H1 (cell line): ENCODE measurements at regions of chr12 and their contacts with region 1.

Region 1: DNA sequence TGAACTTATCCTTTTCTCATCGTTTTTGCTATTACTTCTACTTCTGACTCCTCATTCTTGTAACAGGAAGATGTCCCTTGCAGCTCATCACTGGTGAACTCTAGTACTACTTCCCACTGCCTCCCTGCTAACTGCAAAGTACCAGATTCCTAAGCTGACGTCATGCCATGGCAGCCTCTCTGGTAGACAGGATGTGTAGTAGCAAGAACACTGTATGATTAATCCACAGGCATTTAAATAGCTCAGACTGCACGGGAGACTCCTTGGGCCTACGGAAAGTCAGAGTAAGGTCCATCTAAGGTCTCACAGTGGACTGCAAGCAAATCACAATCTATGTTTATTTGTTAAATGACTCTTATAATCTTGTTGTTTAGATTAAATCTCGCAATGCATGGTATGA is 43.5 kb downstream of the DNAI7 start:
- DNase-seq: no peak
- H3K4me3 ChIP-seq: no peak overlapping the region
- H3K27ac ChIP-seq: no peak overlapping the region
- H3K4me1 ChIP-seq: peaks cover 0 to 9% (median 0%) of the 10 kb centered on the region in 4 experiments; a peak in 3 of 7 replicates
- H3K27me3 ChIP-seq: no peaks in the 10 kb centered on the region
- CTCF ChIP-seq: no peak
- EP300 ChIP-seq: no peak
- POLR2A ChIP-seq: no peak
- RAD21 ChIP-seq: no peak

Region 2: DNA sequence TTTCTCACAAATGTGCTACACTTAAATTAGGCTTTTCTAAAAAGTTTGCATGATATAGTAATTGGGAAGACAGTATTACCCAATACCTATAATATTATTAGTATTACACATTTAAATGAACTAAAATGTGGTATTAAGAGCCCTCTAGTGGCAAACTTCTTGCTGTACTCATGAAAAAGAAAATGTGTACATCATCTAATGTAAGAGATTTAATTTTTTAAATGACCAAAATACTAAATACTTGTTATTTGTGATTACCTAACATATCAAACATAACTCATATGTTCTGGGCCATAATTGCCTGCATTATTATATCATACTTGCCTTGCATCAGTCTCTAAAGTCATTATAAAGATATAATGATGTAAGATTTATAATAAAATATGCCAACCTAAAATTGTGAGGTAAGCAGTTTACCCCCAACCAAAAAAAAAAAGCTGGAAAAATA is 20.7 kb before region 1 on chr12:
- CTCF ChIA-PET with region 1: interaction called, 19 read pairs
- POLR2A ChIA-PET with region 1: no interaction called
- DNase-seq: no peak
- H3K4me3 ChIP-seq: no peak overlapping the region
- H3K27ac ChIP-seq: no peak overlapping the region
- H3K4me1 ChIP-seq: no peaks in the 10 kb centered on the region
- H3K27me3 ChIP-seq: no peaks in the 10 kb centered on the region
- CTCF ChIP-seq: peak in 2 of 3 experiments; percentile 19 to 25; a peak in 2 of 4 replicates
- EP300 ChIP-seq: no peak
- POLR2A ChIP-seq: no peak
- RAD21 ChIP-seq: peak; percentile 50 to 66

Region 3: DNA sequence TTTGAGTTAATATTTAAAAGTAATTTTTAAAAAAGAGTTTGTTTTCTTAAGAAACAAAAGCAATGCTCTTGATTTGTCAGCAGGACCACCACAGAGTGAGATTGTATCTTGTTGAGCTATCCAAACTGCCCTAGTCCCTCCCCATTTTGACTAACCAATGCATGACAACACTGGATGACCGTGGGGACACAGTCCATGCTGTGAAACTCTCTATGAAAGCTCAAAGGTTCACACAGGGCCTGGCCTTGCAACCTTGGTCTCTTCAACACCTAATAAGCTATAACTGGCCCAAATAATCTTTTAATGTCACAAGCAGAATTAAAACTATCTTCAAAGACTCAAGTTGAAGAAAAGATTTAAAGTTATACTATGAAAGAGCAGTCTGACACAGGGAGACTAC is 57.1 kb after region 1 on chr12:
- CTCF ChIA-PET with region 1: no interaction called
- POLR2A ChIA-PET with region 1: no interaction called
- DNase-seq: no peak
- H3K4me3 ChIP-seq: no peak overlapping the region
- H3K27ac ChIP-seq: no peak overlapping the region
- H3K4me1 ChIP-seq: no peaks in the 10 kb centered on the region
- H3K27me3 ChIP-seq: no peaks in the 10 kb centered on the region
- CTCF ChIP-seq: no peak
- EP300 ChIP-seq: no peak
- POLR2A ChIP-seq: no peak
- RAD21 ChIP-seq: no peak

Region 4: DNA sequence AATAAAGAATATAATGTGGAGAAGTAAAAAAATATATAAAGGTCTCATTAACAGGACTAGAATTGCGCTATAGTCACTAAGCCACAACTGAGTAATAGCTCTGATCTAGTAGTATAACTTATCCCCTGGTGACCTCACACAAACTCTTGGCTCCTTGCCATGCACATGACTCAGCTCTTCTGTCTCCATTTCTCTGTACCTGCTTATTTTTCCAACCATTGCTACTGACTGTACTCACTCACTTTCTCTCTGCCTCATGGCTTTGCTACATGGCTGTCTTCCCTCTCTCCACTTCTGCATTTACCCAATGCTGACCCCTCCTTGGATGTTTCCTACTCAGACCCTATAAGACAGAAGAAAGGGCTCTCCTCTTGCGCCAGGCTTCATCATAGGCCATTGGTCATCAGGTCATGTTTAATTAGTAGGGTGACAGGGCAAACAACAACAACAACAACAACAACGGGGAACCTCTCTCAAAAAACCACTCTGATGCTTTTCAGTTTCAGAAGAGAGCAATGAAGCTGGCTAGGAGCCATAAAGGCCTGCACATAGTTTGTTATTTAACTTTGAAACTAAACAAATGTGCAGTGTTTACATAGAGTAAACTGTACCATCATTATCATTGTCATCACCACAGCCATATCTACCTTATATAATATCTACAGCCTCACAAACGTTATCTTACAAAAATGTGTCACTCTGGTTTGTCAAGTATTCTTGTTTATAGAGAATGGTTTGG is 124.9 kb after region 1 on chr12:
- CTCF ChIA-PET with region 1: no interaction called
- POLR2A ChIA-PET with region 1: no interaction called
- DNase-seq: no peak
- H3K4me3 ChIP-seq: no peak overlapping the region
- H3K27ac ChIP-seq: no peak overlapping the region
- H3K4me1 ChIP-seq: no peaks in the 10 kb centered on the region
- H3K27me3 ChIP-seq: no peaks in the 10 kb centered on the region
- CTCF ChIP-seq: no peak
- EP300 ChIP-seq: no peak
- POLR2A ChIP-seq: no peak
- RAD21 ChIP-seq: no peak